Activated B cell treated with CpG ODN at 0.5 μM for 24 hours (primary cell): ENCODE measurements at regions of chr9 and their contacts with region 1.

Region 1: GRCh38 chr9:91036826-91037510 is 235.3 kb downstream of the SYK start:
- DNase-seq: no peak
- ATAC-seq: peak; percentile 34
- H3K4me3 Mint-ChIP-seq: peak overlapping the region; percentile 55
- H3K27ac Mint-ChIP-seq: no peak overlapping the region
- H3K4me1 Mint-ChIP-seq: peaks cover 31% of the 10 kb centered on the region
- H3K27me3 Mint-ChIP-seq: peaks cover 12% of the 10 kb centered on the region
- CTCF ChIP-seq: no peak

Region 2: GRCh38 chr9:90964101-90965020 is 72.6 kb before region 1 on chr9:
- CTCF ChIA-PET with region 1: no interaction called
- POLR2A ChIA-PET with region 1: no interaction called
- intact Hi-C with region 1: no loop called
- DNase-seq: no peak
- ATAC-seq: peak; percentile 68
- H3K4me3 Mint-ChIP-seq: peak overlapping the region; percentile 5
- H3K27ac Mint-ChIP-seq: no peak overlapping the region
- H3K4me1 Mint-ChIP-seq: peaks cover 7% of the 10 kb centered on the region
- H3K27me3 Mint-ChIP-seq: peaks cover 11% of the 10 kb centered on the region
- CTCF ChIP-seq: no peak

Region 3: DNA sequence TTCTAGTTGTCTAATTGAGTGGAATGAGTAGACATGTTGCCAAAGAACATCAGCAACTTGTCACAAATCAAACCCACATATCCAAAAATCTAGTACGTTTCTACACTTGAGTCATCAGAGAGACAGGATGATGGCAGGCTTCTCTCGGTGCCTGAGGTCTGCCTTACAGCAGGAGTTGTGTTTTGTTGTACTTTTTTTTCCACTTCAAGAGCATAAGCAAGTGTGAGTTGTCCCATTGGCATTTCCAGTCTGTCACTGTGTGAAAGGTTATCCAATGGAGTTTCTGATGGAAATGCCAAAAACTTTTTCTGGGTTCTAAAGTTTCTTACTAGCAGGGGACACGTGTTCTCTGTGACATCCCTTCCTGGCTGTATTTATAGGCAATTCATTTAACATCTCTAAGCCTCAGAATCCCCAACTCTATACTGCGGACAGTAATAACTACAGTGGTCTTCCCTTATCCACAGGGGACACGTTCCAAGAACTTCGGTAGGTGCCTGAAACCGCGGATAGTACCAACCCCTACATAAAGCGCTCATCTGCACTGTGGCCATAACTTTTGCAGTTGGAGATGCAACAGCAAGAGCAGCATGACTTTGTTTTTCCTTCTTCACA is 11.1 kb after region 1 on chr9:
- CTCF ChIA-PET with region 1: no interaction called
- POLR2A ChIA-PET with region 1: no interaction called
- intact Hi-C with region 1: no loop called
- DNase-seq: no peak
- ATAC-seq: no peak
- H3K4me3 Mint-ChIP-seq: no peak overlapping the region
- H3K27ac Mint-ChIP-seq: no peak overlapping the region
- H3K4me1 Mint-ChIP-seq: no peaks in the 10 kb centered on the region
- H3K27me3 Mint-ChIP-seq: peaks cover 31% of the 10 kb centered on the region
- CTCF ChIP-seq: no peak

Region 4: GRCh38 chr9:91255327-91255726 is 218.4 kb after region 1 on chr9:
- CTCF ChIA-PET with region 1: interaction called, 3 read pairs
- POLR2A ChIA-PET with region 1: no interaction called
- intact Hi-C with region 1: loop called (anchors 5 kb)
- DNase-seq: no peak
- ATAC-seq: no peak
- H3K4me3 Mint-ChIP-seq: no peak overlapping the region
- H3K27ac Mint-ChIP-seq: no peak overlapping the region
- H3K4me1 Mint-ChIP-seq: no peaks in the 10 kb centered on the region
- H3K27me3 Mint-ChIP-seq: no peaks in the 10 kb centered on the region
- CTCF ChIP-seq: no peak

Region 5: GRCh38 chr9:91681461-91682305 is 644.7 kb after region 1 on chr9:
- CTCF ChIA-PET with region 1: no interaction called
- POLR2A ChIA-PET with region 1: no interaction called
- intact Hi-C with region 1: loop called (anchors 1 kb)
- DNase-seq: peak; percentile 51
- ATAC-seq: peak; percentile 87
- H3K4me3 Mint-ChIP-seq: peak overlapping the region; percentile 70
- H3K27ac Mint-ChIP-seq: no peak overlapping the region
- H3K4me1 Mint-ChIP-seq: peaks cover 5% of the 10 kb centered on the region
- H3K27me3 Mint-ChIP-seq: peaks cover 27% of the 10 kb centered on the region
- CTCF ChIP-seq: no peak